ENCODE measurements at regions of chr6 and their contacts with region 1.

Region 1: GRCh38 chr6:8219352-8219943 is 117.1 kb upstream of the EEF1E1 start:
- DNase-seq: peak; percentile 49
- CTCF ChIP-seq: peak; percentile 56

Region 2: GRCh38 chr6:7725849-7726415 is 493.5 kb before region 1 on chr6 and contains the start of gene BMP6:
- CTCF ChIA-PET with region 1: interaction called, 41 read pairs
- POLR2A ChIA-PET with region 1: no interaction called
- DNase-seq: peak; percentile 87
- CTCF ChIP-seq: no peak

Region 3: DNA sequence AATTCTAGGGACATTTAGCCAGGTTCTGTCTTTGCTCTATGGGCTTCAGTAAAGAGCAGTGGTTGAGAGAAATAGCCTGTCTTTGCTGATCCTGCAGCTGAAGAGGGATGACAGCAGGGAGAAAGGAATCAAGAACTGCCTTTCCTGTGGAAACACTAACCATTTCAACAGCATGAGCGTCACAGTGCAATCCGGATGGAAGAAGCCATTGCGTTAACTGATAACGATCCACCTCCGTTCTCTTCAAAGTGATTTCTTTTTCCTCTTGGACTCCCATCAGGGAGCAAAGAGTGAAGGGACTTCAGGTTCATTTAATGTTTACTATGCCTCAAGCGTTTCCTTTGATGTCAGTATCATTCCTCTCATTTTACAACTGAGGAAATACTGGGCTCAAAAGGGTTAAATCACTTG is 81.9 kb before region 1 on chr6:
- CTCF ChIA-PET with region 1: interaction called, 181 read pairs
- POLR2A ChIA-PET with region 1: no interaction called
- DNase-seq: no peak
- CTCF ChIP-seq: no peak

Region 4: DNA sequence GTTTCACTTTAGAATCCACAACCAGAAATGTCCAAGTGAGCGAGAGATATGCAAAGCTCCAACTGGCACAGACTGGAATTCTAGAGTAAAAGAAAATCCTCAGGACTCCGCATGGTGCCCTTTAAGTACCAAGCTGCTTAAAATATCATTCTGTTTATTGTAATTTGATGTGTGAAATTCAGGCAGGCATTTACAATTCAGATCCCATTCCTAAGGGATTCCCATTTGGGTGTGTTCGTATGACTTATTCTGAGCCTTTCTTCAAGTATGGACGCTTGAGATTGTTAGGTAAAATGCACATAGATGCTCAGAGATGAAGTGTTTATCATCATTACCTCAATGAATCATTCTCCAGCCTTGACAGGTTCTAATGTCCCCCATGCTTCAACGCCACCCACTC is 17.8 kb before region 1 on chr6:
- CTCF ChIA-PET with region 1: interaction called, 50 read pairs
- POLR2A ChIA-PET with region 1: no interaction called
- DNase-seq: no peak
- CTCF ChIP-seq: no peak

Region 5: DNA sequence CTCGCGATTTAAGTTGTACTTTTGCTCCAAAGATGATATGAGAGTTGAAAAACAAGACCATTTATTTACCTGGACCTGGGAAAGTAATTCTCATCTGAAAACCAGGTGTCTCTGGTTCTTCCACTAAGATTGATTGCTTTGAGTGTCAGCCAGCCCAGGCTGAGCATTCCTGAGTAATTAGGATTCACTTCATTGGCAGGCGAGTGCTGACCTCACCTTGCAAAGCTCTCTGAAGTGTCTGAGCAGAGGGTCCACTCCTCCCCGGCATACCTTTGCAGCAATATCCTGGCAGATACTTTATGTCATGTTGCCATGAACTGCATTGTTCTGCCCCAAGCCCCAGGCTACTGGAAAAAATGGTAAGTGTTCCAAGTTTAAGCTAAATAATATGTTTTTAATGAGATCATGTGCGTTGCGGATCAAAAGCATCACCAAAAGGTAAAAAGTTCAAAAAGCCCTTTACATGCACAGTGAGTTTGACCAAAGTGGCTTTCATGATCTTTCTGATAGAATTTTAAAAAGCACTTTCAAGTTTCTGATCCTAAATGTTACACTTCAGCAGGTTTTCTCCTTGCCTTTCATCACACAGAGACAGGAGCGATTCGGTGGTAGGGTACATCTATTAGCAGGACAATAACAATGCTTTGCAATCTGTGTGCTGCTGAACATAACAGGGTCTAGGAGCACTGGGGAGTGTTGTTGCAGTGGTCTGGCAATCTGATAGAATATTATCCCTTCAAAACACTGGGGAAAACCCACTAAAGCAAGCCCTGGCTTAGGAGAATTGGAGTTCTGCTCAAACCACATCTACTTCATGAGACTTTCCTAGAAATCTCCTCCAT is 10.7 kb after region 1 on chr6:
- CTCF ChIA-PET with region 1: interaction called, 26 read pairs
- POLR2A ChIA-PET with region 1: no interaction called
- DNase-seq: no peak
- CTCF ChIP-seq: no peak

Measured in GM10248 (cell line).